ENCODE measurements at regions of chr6 and their contacts with region 1.

Region 1: GRCh38 chr6:55617272-55617671 is 38.3 kb upstream of the HMGCLL1 start:
- DNase-seq: peak; percentile 56
- ATAC-seq: peak; percentile 67; the same call in 1 of the 2 replicates
- H3K4me3 ChIP-seq: no peak overlapping the region
- H3K27ac ChIP-seq: no peak overlapping the region
- H3K4me1 ChIP-seq: no peaks in the 10 kb centered on the region
- H3K27me3 ChIP-seq: no peaks in the 10 kb centered on the region
- CTCF ChIP-seq: peak; percentile 67
- POLR2A ChIP-seq: no peak
- RAD21 ChIP-seq: peak; percentile 64

Region 2: DNA sequence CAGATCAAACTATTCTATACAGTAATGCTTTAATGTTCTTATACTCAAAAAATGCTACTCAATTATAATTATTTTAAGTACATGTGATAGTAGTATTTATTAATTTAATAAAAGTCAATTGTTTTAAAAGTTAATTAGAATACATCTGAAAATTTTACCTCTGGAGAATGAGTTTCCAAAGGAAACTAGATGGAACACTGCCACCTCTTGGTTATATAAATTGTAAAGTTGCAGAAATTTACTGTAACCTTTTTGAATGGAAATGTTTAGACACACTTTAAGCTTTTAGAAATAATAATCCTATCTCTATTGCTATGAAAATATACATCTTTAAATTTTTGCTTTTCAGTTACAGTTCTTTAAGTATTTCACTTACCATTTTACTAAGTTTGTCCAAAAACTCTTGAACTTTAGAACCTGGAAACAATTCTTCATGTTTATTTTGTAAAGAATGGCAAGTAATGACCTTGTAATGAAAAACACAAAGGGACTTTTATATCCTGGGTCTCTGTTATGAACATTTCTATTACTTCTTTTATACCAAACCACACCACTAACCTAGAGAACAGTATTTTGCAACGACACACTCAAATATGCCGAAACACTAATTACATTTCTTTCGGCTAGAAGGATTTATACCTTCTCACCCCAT is 269.0 kb after region 1 on chr6:
- CTCF ChIA-PET with region 1: no interaction called
- POLR2A ChIA-PET with region 1: no interaction called
- dilution Hi-C with region 1: no loop called
- in situ Hi-C with region 1: loop called (anchors 10 kb)
- intact Hi-C with region 1: loop called (anchors 5 kb)
- DNase-seq: peak; percentile 24
- ATAC-seq: no peak; the same call in 1 of the 2 replicates
- H3K4me3 ChIP-seq: no peak overlapping the region
- H3K27ac ChIP-seq: peak overlapping the region; percentile 78; the same call in 1 of the 2 replicates
- H3K4me1 ChIP-seq: 0 out of 2 replicates have a peak, but pooled peaks cover 2% of the 10 kb centered on the region
- H3K27me3 ChIP-seq: no peaks in the 10 kb centered on the region
- CTCF ChIP-seq: peak; percentile 57
- POLR2A ChIP-seq: no peak
- RAD21 ChIP-seq: peak; percentile 60